PC-9 (cell line): ENCODE measurements at regions of chr10 and their contacts with region 1.

Region 1: DNA sequence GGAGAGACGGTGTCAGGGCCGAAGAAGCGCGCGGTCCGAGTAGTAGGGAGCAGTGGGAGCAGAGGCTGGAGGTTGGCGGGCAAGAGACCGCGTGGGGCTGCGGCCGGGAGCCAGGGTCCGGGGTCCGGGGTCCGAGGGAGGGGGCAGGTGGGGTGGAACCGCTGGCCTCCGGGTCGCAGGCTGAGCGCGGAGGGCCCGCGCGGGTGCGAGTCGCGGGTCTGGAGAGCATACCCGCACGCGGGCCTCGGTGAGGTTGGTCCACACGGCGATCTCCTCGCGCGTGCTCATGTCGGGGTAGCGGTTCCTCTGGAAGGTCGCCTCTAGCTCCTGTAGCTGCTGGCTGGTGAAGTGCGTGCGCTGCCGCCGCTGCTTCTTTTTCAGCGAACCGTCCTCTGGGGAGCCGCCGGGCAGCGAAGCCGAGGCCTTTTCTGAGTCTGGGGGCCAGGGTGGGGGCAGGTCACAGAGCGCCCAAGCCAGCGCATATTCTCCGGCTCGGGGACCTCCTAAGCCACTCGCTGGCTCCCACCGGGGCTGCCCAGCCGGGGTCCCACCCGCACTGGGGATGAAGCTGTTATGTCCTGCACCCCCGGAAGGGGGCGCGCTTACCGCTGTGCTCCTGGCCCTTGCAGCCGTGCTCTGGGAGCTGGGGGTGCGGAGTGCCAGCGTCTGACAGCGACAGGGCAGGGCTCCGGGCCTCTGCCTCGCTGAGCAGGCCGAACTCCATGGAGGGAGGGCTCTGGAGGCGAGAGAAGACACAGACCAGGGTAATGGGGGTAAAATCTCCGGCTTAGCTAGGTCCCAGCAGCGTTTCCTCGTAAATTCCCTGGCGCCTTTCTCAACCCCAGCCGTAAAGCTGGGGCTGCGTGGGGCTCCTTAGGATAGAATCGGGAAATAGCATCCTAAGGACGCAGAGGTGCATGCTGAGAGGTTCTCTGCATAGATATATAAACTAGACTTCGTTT is 5.5 kb downstream of the ELOVL3 start:
- DNase-seq: peak in 1 of 2 experiments; percentile 61
- H3K4me3 ChIP-seq: peak overlapping the region; percentile 57; the same call in 1 of the 2 replicates
- H3K27ac ChIP-seq: no peak overlapping the region
- H3K4me1 ChIP-seq: peaks cover 11% of the 10 kb centered on the region; the same call in 1 of the 2 replicates
- H3K27me3 ChIP-seq: no peaks in the 10 kb centered on the region
- CTCF ChIP-seq: peak; percentile 87

Region 2: DNA sequence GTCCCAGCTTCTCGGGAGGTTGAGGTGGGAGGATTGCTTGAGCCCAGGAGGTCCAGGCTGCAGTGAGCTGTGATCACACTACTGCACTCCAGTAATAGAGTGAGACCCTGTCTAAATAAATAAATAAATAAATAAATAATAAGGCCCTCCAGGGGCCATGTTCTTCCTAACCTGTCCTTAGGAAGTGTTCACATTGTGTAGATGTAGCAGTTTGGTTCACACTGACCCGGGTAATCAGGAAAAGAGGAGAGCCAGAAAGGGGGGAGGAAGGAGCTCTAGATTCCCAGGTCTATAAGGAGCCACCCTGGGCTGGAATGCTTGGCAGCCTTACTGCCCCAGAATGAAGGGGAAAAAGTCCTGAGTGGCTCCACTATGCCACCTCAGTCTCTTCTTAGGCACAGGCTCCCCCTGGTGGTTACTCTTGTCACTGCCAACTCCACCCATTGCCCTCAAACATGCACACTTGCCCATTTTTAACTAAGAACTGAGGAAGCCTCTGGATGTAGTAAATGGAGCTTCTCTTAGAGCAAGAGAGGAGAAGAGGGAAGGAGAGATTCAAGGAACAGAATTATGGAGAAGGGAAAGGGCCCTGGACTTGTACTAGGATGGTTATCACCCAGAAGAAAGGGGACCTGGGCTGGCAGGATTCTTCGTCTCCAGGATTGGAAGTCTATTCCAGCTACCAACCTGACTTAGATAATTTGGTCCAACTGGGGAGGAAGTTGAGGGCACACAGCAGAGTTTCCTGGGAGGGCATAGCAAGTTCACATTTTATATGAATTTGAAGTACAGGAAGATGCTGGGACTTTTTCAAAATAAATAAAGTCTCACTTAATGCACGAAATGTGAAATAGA is 158.7 kb before region 1 on chr10:
- CTCF ChIA-PET with region 1: no interaction called
- POLR2A ChIA-PET with region 1: no interaction called
- intact Hi-C with region 1: no loop called
- DNase-seq: peak in 1 of 2 experiments; percentile 72
- H3K4me3 ChIP-seq: no peak overlapping the region
- H3K27ac ChIP-seq: no peak overlapping the region
- H3K4me1 ChIP-seq: no peaks in the 10 kb centered on the region
- H3K27me3 ChIP-seq: no peaks in the 10 kb centered on the region
- CTCF ChIP-seq: peak; percentile 87

Region 3: GRCh38 chr10:102268375-102268888 is 36.8 kb after region 1 on chr10:
- CTCF ChIA-PET with region 1: interaction called, 12 read pairs
- POLR2A ChIA-PET with region 1: no interaction called
- intact Hi-C with region 1: no loop called
- DNase-seq: no peak
- H3K4me3 ChIP-seq: no peak overlapping the region
- H3K27ac ChIP-seq: no peak overlapping the region
- H3K4me1 ChIP-seq: no peaks in the 10 kb centered on the region
- H3K27me3 ChIP-seq: no peaks in the 10 kb centered on the region
- CTCF ChIP-seq: no peak

Region 4: GRCh38 chr10:102352066-102352715 is 120.6 kb after region 1 on chr10:
- CTCF ChIA-PET with region 1: interaction called, 17 read pairs
- POLR2A ChIA-PET with region 1: no interaction called
- intact Hi-C with region 1: loop called (anchors 1 kb)
- DNase-seq: peak in 1 of 2 experiments; percentile 41
- H3K4me3 ChIP-seq: no peak overlapping the region
- H3K27ac ChIP-seq: no peak overlapping the region
- H3K4me1 ChIP-seq: no peaks in the 10 kb centered on the region
- H3K27me3 ChIP-seq: no peaks in the 10 kb centered on the region
- CTCF ChIP-seq: peak; percentile 87

Region 5: DNA sequence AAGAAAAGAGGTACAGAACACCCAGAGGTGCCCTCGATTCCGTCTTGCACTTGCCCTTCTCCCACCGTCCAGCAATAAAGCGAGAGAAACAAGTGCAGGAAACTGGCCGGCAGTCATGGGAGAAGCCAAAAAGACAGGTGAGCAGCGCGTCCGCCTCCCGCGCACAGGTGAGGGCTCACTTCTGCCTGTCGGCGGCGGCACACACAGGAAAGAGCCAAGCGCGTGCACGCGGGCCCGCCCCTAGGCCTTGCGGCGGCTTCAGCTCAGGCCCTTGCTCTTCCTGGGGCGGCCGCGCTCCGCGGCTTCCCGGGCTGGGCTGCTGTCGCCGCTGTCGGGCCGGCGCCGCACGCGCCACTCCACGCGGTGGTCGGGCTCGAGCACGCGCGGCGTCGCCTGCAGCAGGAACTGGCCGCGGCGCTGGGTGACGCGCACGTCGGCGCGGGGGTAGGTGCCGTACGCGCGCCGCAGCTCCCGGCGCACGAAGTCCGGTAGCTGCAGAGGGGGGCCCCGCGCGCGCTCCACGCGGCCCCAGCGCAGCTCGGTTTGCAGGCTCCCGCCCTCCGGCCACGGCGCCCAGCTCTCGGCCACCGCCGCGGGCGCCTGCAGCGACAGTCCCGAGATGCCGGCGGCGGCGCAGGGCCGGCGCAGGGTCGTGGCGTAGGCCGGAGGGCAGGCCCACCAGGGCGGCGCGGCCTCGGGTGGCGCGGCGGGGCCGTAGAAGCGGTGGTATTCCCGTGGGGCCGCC is 218.7 kb after region 1 on chr10:
- CTCF ChIA-PET with region 1: interaction called, 12 read pairs
- POLR2A ChIA-PET with region 1: no interaction called
- intact Hi-C with region 1: no loop called
- DNase-seq: peak; percentile 50 to 82
- H3K4me3 ChIP-seq: peak overlapping the region; percentile 77
- H3K27ac ChIP-seq: peak overlapping the region; percentile 59
- H3K4me1 ChIP-seq: peaks cover 17% of the 10 kb centered on the region
- H3K27me3 ChIP-seq: no peaks in the 10 kb centered on the region
- CTCF ChIP-seq: no peak